Prostate gland (tissue), 2 donors: ENCODE measurements at regions of chr12 and their contacts with region 1.

Region 1: GRCh38 chr12:7859552-7859951 is 13.2 kb downstream of the SLC2A14 start:
- DNase-seq: no peak
- H3K4me3 ChIP-seq: no peak overlapping the region
- H3K27ac ChIP-seq: no peak overlapping the region
- H3K4me1 ChIP-seq: no peaks in the 10 kb centered on the region
- H3K27me3 ChIP-seq: no peaks in the 10 kb centered on the region
- CTCF ChIP-seq: no peak
- POLR2A ChIP-seq: no peak

Region 2: GRCh38 chr12:7995266-7995963 is 135.9 kb after region 1 on chr12:
- intact Hi-C with region 1: loop called (anchors 2 kb)
- DNase-seq: peak; percentile 68
- H3K4me3 ChIP-seq: no peak overlapping the region
- H3K27ac ChIP-seq: no peak overlapping the region
- H3K4me1 ChIP-seq: no peaks in the 10 kb centered on the region
- H3K27me3 ChIP-seq: no peaks in the 10 kb centered on the region
- CTCF ChIP-seq: peak; percentile 80 to 91 (median 86)
- POLR2A ChIP-seq: no peak